Activated CD4-positive, alpha-beta memory T cell treated with anti-CD3 and anti-CD28 coated beads, Interleukin-2, amount 10 ng/mL, durations not matched to agents 7 days and 5 days (primary cell): ENCODE measurements at regions of chr14 and their contacts with region 1.

Region 1: DNA sequence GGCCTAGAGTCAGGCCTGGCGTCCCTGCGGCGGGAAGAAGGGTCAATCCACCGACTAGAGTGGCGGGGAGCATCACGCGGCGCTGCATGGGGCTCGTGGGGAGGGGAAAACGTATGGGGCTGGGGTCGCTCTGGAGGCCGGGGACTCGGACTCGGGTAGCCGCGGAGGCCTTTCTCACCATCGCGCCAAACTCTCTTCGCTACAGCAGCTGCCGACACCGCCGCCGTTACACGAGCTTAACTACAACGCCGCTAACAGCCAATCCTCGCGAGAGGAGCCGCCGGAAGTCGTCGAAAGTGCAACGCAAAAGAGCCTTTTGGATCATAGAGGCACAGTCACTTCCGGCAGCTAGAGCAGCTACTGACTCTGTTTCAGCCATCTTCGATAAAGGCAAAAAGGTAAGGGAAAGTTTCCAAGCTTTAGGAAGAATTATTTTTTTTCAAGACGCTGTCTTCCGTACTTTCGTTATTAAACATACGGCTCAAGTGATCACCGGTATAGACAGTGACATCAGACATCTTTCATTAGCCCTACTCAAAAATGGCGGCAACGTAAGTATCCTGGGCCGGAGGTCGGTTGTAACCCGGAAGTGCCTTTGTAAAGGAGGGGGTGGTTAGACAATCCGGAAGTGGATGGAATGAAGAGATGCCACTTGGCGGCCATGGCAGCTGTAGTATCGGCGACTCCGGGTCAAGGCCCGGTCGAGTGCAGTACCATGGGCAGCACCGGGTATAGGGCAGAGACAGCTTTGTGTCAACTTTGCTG is at the starts of genes ERH and SLC39A9:
- DNase-seq: peak; percentile 95
- H3K4me3 Mint-ChIP-seq: peak within 1 kb of the TSS; percentile 92
- H3K27ac Mint-ChIP-seq: peak within 1 kb of the TSS; percentile 93
- H3K4me1 Mint-ChIP-seq: peaks cover 67% of the 10 kb centered on the region
- H3K27me3 Mint-ChIP-seq: no peaks in the 10 kb centered on the region
- total RNA-seq, gene ERH: 281 to 295 TPM
- total RNA-seq, gene SLC39A9: 46.1 to 47.2 TPM

Region 2: GRCh38 chr14:69260861-69261564 is 137.2 kb before region 1 on chr14:
- CTCF ChIA-PET with region 1: no interaction called
- POLR2A ChIA-PET with region 1: no interaction called
- DNase-seq: peak; percentile 41
- H3K4me3 Mint-ChIP-seq: peak overlapping the region; percentile 48
- H3K27ac Mint-ChIP-seq: no peak overlapping the region
- H3K4me1 Mint-ChIP-seq: peaks cover 7% of the 10 kb centered on the region
- H3K27me3 Mint-ChIP-seq: peaks cover 69% of the 10 kb centered on the region

Region 3: DNA sequence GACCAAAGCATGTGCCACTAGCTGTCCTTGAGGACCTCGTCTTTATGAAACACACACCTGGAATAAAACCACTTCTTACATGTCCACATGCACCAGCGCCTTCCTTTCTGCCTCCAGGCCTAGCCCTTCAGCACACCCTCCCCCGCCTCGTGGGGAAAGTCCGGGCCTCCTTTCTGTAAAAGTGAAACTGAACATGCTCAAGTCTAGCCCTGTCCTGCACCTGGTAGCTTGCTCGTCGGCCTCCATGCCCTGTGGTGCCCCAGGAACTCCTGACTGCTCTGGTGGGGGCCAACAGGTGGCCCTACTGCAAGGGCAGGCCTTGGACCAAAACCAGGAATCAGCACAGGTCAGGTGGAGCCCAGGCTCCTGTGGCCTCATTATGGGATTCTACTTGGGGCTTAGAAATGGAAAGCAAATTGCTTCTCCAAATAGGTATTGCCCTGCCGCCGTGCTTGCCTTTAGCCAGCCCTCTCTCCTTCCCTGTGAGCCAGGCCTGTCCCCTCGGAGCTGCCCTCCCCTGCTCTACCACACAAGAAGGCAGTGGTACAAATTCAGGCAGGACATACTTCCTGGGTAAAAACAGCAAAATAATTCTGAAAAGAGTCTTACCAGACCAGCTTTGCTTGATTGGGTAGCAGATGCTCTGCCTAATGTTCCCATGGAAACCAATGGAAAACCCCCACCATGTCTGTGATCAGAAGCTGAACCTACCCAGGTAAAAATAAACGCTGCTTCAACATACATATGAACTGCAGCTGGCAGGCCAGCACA is 43.7 kb before region 1 on chr14:
- CTCF ChIA-PET with region 1: interaction called, 4 read pairs
- POLR2A ChIA-PET with region 1: interaction called, 19 read pairs
- DNase-seq: peak; percentile 76
- H3K4me3 Mint-ChIP-seq: peak overlapping the region; percentile 55
- H3K27ac Mint-ChIP-seq: peak overlapping the region; percentile 76
- H3K4me1 Mint-ChIP-seq: peaks cover 26% of the 10 kb centered on the region
- H3K27me3 Mint-ChIP-seq: no peaks in the 10 kb centered on the region

Region 4: DNA sequence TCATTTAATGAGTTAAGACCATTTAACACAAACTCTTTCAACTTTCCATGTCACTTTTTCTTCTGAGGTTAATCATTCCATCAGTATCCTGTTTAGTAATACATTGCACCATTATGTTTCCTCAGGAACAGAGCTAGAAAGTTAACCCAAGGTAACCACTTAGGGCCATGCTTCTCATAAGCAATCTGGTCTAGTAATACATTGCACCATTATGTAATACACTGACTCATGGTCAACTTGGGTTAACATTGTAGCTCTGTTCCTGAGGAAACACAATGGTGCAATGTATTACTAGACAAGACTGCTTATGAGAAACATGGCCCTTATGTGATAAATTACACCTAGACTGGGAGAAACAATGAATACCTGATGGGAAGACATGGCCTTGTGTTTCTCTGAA is 21.8 kb before region 1 on chr14:
- CTCF ChIA-PET with region 1: no interaction called
- POLR2A ChIA-PET with region 1: interaction called, 13 read pairs
- DNase-seq: no peak
- H3K4me3 Mint-ChIP-seq: no peak overlapping the region
- H3K27ac Mint-ChIP-seq: no peak overlapping the region
- H3K4me1 Mint-ChIP-seq: peaks cover 3% of the 10 kb centered on the region
- H3K27me3 Mint-ChIP-seq: no peaks in the 10 kb centered on the region

Region 5: DNA sequence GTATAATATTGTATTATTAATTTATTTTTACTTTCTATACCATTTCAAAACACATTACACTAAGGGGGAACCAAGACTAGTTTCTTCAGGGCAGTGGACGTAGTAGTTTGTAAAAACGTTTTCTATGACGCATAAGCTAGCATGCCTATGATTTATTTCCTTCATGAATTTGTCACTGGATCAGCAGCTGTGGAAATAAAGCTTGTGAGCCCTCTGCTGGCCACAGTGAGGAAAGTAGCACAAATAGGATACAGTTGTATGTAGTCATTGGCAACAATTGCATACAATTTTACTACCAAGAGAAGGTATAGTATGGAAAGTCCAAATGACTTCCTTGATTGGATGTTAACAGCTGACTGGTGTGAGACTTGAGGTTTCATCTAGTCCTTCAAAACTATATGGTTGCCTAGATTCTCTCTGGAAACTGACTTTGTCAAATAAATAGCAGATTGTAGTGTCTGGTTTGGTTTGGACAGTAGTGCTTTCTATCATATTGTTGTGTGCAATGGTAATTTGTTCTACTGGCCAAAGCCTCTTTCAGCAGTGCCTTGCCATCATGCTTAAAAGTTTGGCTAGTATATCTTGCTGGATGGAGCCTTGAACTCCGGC is 62.0 kb after region 1 on chr14:
- CTCF ChIA-PET with region 1: interaction called, 11 read pairs
- POLR2A ChIA-PET with region 1: interaction called, 7 read pairs
- DNase-seq: peak; percentile 64
- H3K4me3 Mint-ChIP-seq: no peak overlapping the region
- H3K27ac Mint-ChIP-seq: no peak overlapping the region
- H3K4me1 Mint-ChIP-seq: no peaks in the 10 kb centered on the region
- H3K27me3 Mint-ChIP-seq: no peaks in the 10 kb centered on the region